ENCODE measurements at regions of chr4 and their contacts with region 1.

Region 1: DNA sequence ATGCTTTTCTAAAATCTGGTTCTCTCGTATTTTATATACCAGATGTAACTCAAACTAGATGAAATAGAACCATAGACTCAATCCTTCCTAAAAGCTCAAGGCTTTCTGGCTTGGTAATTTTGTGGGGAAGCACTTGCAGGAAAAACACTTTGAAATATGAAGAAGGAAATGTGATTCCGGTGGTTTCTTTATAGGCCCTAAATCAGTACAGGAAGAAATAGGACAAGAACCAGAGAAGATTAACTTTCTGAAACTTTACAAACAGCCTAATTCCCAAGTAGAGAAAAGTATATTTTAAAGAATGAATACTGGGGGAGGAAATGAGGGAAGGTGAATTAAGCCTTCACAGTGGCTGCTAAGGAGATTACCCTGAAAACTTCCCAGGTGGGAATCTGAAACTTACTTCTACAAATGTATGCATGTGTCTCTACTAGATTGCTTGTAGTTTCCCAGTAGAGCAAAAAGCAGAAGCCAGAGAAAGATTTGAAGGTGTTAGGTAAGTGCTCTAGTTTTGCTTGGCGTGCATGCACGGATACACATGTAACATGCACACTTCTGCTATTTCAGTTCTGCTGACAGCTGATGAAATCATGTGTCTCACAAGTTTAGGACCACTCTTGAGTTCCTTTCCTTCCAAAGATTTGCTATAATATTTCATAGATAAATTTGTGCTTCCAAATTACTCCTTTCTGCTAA is 92.1 kb downstream of the AFF1 start:
- DNase-seq: no peak
- H3K4me3 Mint-ChIP-seq: no peak overlapping the region
- H3K27ac Mint-ChIP-seq: no peak overlapping the region
- H3K4me1 Mint-ChIP-seq: peaks cover 22% of the 10 kb centered on the region
- H3K27me3 Mint-ChIP-seq: no peaks in the 10 kb centered on the region

Region 2: DNA sequence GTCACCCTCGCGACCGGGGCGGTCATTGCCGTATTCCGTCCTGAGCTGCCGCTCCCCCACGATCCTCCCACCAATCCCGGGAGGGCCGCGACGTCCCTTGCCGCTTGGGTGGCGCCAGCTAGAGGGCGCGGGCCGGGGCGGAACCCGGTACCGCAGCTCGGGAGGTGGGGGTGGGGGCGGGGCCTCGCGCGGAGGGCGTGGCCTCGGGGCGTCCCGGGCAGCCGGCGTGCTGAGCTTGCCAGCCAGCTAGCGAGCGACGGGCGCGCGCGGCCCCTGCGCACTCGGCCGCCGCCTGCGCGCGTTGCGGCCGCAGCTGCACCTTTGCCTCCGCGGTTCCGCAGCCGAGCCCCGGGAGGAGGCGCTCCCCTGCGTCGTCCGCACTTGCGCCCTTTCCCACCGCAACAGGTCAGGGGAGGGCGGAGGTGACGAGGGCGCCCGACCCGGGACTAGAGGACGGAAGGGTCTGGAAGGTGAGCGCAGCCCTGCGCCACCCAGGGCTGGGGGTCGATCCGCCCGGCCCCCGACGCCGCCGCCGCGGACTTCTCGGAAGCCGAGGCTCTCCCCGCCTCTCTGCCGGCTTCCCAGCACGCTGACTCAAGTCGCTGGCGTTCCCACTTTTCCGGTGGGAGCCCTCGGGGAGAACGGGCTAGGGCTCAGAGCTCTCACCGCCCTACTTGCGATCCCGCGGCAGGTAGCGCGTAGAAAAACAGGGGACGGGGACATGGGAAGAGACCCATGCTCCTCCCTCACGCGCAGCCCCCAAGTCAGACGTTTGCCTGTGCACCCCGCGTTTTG is 92.0 kb before region 1 on chr4 and contains the start of gene AFF1:
- intact Hi-C with region 1: no loop called
- DNase-seq: peak; percentile 96
- H3K4me3 Mint-ChIP-seq: peak within 1 kb of the TSS; percentile 94
- H3K27ac Mint-ChIP-seq: peak within 1 kb of the TSS; percentile 98
- H3K4me1 Mint-ChIP-seq: peaks cover 48% of the 10 kb centered on the region
- H3K27me3 Mint-ChIP-seq: no peaks in the 10 kb centered on the region
- total RNA-seq, gene AFF1: 44.0 and 44.3 TPM in 2 replicates

Region 3: GRCh38 chr4:87051121-87051713 is 24.3 kb after region 1 on chr4:
- intact Hi-C with region 1: loop called (anchors 2 kb)
- DNase-seq: peak; percentile 51
- H3K4me3 Mint-ChIP-seq: no peak overlapping the region
- H3K27ac Mint-ChIP-seq: peak overlapping the region; percentile 78
- H3K4me1 Mint-ChIP-seq: peaks cover 50% of the 10 kb centered on the region
- H3K27me3 Mint-ChIP-seq: no peaks in the 10 kb centered on the region